Gastrocnemius medialis (tissue), 4 donors: ENCODE measurements at regions of chr18 and their contacts with region 1.

Region 1: DNA sequence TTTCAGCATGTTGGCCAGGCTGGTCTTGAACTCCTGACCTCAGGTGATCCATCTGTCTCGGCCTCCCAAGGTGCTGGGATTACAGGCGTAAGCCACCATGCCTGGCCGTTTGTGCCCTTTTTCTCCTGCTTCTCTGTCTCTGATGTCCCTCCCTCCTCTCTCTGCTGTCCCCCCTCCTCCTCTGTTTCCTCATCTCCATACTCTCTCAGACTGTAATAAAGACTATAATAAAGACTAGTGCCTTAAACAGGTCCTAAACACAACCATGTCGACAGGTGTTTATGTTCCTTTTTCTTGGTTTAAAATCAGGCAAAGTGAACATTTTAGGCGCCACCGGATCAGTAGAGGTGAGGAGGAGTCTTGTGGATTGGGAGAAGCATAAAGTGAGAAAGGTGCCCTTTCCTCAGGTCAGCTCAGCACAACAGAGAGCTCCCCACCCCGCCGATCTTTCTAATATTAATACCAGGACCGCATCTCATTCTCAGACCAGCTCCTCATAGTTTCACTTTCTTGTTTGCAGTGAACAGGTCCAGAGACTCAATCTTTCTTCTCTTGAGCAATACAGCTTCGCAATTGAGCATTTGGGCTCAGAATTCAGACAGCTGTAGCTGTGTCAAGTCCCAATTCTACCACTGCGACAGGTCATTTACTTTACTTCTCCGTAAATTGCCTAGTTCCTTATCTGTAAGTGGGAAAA is 23.7 kb downstream of the TIMM21 start:
- DNase-seq: no peak
- ATAC-seq: no peak
- H3K4me3 ChIP-seq: no peak overlapping the region
- H3K27ac ChIP-seq: no peak overlapping the region
- H3K4me1 ChIP-seq: no peaks in the 10 kb centered on the region
- H3K27me3 ChIP-seq: peaks cover 0 to 5% (median under 1%) of the 10 kb centered on the region in 3 donors
- CTCF ChIP-seq: no peak
- POLR2A ChIP-seq: no peak

Region 2: DNA sequence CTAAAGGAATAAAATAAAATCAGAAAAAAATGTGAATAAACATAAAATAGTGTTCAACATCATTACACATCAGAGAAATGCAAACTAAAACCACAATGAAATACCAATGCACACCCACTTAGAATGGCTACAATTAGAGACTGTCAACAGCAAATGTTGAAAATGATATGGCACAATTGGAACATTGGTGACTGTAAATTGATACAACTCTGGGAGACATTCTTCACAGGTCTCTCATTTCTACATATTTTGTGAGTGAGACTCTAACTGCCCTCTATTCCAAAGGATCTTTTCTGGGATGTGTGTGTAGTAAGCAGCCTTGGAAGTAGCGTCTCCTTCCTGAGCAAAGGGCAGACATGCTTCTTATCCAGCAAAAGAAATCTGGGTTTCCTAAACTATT is 347.4 kb before region 1 on chr18:
- in situ Hi-C with region 1: no loop called
- intact Hi-C with region 1: loop called (anchors 5 kb)
- DNase-seq: no peak
- ATAC-seq: no peak
- H3K4me3 ChIP-seq: no peak overlapping the region
- H3K27ac ChIP-seq: no peak overlapping the region
- H3K4me1 ChIP-seq: no peaks in the 10 kb centered on the region
- H3K27me3 ChIP-seq: no peaks in the 10 kb centered on the region
- CTCF ChIP-seq: no peak
- POLR2A ChIP-seq: no peak